Uterus (tissue), 4 donors: ENCODE measurements at regions of chr3 and their contacts with region 1.

Region 1: GRCh38 chr3:14402304-14402811 is at the start of gene SLC6A6:
- DNase-seq: peak; percentile 94 to 96
- H3K4me3 ChIP-seq: peak within 1 kb of the TSS; percentile 40 to 97
- H3K27ac ChIP-seq: peak within 1 kb of the TSS; percentile 79 to 97
- H3K4me1 ChIP-seq: peaks cover 0 to 14% of the 10 kb centered on the region in 2 donors
- H3K27me3 ChIP-seq: no peaks in the 10 kb centered on the region
- CTCF ChIP-seq: peak; percentile 17 to 67 (median 52)
- POLR2A ChIP-seq: peak; percentile 20 to 63
- total RNA-seq, gene SLC6A6: 15.9 to 37.5 (median 18.0) TPM

Region 2: DNA sequence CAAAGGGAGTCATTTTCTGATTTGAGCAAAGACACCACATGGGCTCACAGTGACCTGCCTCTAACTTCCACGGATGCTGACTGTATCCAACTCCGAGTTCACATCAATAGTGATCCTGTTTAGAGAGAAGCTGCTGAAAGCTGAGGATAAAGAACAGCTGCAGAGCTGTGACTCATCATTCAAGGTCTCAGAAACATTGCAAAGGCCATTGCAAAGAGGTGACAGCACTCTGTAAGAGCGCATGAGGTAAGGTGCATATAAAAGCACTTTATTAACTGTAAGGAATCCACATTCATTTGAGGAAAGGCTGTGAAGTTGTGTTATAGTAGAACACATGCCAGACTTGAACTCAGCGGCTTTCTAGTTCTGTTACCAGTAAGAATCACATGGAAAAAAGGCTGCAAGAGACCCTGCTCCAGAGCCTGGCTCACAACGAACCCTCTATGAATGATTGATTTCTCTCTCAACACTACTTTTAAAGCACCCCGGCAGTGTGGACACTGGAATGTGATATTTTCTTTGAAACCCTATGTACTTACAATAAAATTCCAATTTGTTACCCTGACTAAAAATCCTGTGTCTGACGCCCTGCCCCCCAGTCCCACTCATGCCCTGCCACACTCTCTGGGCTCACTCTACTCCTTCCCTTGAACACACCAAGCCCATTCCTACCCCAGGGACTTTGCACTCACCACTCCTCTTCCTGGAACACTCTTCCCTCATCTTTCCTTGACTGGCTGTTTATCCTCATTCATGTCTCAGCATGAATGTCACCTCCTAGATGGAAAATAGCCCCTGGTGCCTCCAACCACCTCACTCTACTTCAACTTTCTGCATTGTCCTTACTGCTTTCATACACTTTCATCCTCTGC is 112.5 kb before region 1 on chr3:
- intact Hi-C with region 1: no loop called
- DNase-seq: peak in 1 of 2 donors; percentile 43
- H3K4me3 ChIP-seq: no peak overlapping the region
- H3K27ac ChIP-seq: peak overlapping the region in 1 of 2 donors; percentile 14
- H3K4me1 ChIP-seq: no peaks in the 10 kb centered on the region
- H3K27me3 ChIP-seq: no peaks in the 10 kb centered on the region
- CTCF ChIP-seq: no peak
- POLR2A ChIP-seq: no peak

Region 3: GRCh38 chr3:14461748-14462324 is 59.5 kb after region 1 on chr3:
- intact Hi-C with region 1: loop called (anchors 10 kb)
- DNase-seq: no peak
- H3K4me3 ChIP-seq: no peak overlapping the region
- H3K27ac ChIP-seq: peak overlapping the region in 1 of 2 donors; percentile 45
- H3K4me1 ChIP-seq: no peaks in the 10 kb centered on the region
- H3K27me3 ChIP-seq: no peaks in the 10 kb centered on the region
- CTCF ChIP-seq: peak; percentile 18 to 53 (median 29)
- POLR2A ChIP-seq: no peak